Cardiac septum (tissue), 1 donor: ENCODE measurements at regions of chr12 and their contacts with region 1.

Region 1: DNA sequence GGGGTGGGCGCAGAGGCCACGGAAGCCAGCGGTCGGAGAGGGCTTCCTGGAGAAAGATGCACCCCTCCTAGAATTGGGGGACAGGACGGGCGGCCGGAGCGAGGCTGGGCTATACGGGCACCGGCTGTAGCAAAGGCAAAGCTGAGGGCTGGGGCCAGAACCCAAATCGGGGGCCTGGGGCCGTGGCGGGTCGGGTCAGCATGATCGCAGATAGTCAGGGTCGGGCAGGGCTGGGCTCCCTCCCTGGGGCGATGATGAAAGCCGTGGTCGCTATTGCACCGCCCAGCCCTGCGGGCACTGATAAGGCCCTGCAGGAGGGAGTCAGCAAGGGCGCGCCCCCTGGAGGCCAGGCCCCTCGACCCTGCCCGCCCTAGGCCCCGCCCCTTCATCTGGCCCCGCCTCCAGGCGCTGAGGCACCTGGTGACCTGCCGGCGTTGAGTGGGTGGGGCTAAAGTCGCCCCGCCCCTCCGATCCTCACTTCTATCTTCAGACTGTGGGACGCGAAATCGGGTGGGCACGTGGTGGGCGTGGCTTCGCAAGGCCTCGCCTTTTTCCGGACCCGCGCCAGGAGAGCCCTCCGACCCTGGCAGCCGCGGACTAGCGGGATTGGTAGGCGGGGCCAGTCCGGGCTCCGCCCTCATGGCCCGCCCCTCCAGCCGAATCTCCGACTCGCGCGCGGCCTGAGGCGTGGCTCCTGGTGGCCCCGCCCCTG is 418 bp upstream of the SH2B3 start:
- DNase-seq: peak; percentile 97

Region 2: GRCh38 chr12:111430433-111431353 is 25.4 kb after region 1 on chr12:
- intact Hi-C with region 1: loop called (anchors 2 kb)
- DNase-seq: no peak

Region 3: DNA sequence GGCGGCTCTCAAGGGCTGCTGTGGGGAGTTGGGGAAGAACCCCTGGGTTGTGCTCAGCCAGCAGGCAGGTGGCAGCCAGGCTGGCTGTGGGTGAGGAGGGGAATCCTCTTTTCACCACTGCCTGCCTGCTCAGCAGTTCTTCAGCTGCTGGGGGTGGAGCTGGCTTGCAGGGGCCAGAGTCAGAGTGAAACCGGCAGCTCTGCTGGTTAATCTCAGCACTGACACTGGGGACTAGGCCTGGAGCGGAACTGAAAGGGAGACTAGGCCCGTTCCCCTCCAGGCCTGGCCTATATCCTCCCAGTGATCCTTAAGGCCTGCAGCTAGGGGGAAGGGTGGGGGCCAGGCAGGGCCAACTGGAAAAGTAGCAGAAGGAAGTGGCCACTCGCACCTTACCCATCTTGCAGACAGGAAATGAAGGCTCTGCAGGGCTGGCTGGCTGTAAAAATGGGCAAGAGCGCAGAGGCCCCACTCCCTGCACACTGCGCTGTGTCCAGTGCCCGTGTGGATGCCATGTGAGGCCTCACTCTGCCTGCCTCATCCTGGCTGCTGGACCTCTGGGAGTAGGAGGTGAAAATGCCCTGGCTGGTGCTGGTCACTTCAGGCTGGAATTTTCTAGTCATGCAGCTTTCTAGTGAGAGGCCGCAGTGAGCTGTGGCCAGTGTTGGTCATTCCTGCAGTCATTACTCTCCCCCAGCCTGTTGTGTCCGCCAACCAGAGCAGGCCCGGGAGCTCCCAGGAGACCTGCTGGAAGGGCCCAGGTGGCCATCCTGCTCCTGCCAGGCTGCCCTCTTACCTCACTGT is 39.8 kb after region 1 on chr12:
- intact Hi-C with region 1: loop called (anchors 5 kb)
- DNase-seq: peak; percentile 87